ENCODE measurements at regions of chr16 and their contacts with region 1.

Region 1: GRCh38 chr16:4330277-4330874 is 14.5 kb downstream of the GLIS2 start:
- DNase-seq: peak; percentile 92
- H3K4me3 Mint-ChIP-seq: no peak overlapping the region
- H3K27ac Mint-ChIP-seq: no peak overlapping the region
- H3K4me1 Mint-ChIP-seq: no peaks in the 10 kb centered on the region
- H3K27me3 Mint-ChIP-seq: peaks cover 8% of the 10 kb centered on the region

Region 2: DNA sequence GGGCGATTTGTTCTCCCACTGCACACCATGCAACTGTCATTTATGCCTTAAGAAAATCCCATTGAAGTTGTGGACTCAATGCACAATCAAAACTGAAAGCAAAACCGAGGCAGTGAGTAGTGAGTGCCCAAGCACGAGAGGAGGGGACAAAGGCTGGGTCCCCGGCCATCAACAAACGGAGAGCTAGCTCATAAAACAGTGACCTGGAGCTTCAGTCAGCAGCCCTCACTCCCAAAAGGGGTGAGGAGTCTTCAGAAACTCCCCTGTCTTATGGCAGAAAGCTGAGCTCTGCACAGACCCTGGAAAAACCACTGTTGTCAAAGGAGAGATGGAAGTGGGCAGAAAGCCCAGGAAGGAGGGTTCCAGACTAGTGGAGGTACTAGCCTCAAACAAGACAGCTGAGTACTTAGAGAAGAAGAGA is 311.0 kb before region 1 on chr16:
- intact Hi-C with region 1: no loop called
- DNase-seq: peak; percentile 65
- H3K4me3 Mint-ChIP-seq: peak overlapping the region; percentile 57
- H3K27ac Mint-ChIP-seq: peak overlapping the region; percentile 22
- H3K4me1 Mint-ChIP-seq: peaks cover 12% of the 10 kb centered on the region
- H3K27me3 Mint-ChIP-seq: no peaks in the 10 kb centered on the region

Region 3: GRCh38 chr16:4244254-4245076 is 85.9 kb before region 1 on chr16:
- intact Hi-C with region 1: no loop called
- DNase-seq: no peak
- H3K4me3 Mint-ChIP-seq: no peak overlapping the region
- H3K27ac Mint-ChIP-seq: no peak overlapping the region
- H3K4me1 Mint-ChIP-seq: no peaks in the 10 kb centered on the region
- H3K27me3 Mint-ChIP-seq: peaks cover 3% of the 10 kb centered on the region

Region 4: DNA sequence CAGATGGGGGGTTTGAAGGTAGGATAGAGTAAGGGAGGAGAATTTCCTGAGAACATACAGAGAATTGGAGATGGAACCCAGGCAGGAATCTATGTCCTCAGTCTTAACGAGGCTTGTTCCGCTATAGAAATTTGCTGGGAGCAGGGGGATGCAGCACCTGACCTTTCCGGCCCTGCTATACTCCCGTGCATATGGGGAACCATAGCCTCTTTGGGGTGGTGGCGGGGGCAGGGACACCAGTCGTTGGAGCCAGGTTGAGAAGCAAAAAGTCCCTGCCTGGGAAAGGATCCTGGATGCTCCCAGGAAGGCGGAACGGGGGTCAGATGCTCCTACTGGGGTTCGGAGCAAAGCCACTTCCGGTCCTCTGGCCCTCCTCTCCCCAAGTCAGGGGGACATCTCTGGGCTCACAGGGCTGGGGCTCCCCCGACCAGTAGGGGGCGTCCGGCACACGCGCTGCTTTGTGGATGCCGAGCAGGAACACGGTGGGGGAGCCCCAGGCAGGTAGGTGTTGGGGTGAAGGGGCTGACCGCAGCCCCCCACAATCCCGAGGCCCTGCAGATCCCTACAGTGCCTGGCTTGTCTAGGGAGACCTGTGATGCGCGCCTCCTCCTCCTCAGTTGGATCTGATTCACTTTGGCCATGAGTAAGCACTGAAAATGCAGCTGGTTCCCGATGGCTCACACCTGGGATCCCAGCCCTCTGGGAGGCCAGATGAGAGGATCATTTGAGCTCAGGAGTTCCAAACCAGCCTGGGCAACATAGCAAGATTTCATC is 42.0 kb before region 1 on chr16:
- intact Hi-C with region 1: loop called (anchors 1 kb)
- DNase-seq: peak; percentile 95
- H3K4me3 Mint-ChIP-seq: no peak overlapping the region
- H3K27ac Mint-ChIP-seq: no peak overlapping the region
- H3K4me1 Mint-ChIP-seq: peaks cover 12% of the 10 kb centered on the region
- H3K27me3 Mint-ChIP-seq: peaks cover 9% of the 10 kb centered on the region